ENCODE measurements at regions of chr4 and their contacts with region 1.

Region 1: GRCh38 chr4:48578132-48578968 is 88.3 kb downstream of the ZAR1 start:
- DNase-seq: peak in 1 of 2 donors; percentile 66
- ATAC-seq: peak; percentile 74 to 94 (median 89)
- H3K4me3 ChIP-seq: no peak overlapping the region
- H3K27ac ChIP-seq: peak overlapping the region in 2 of 10 donors; percentile 8 to 11
- H3K4me1 ChIP-seq: peaks cover 0 to 4% (median 0%) of the 10 kb centered on the region in 9 donors
- H3K27me3 ChIP-seq: no peaks in the 10 kb centered on the region
- CTCF ChIP-seq: peak; percentile 59 to 96 (median 89)

Region 2: DNA sequence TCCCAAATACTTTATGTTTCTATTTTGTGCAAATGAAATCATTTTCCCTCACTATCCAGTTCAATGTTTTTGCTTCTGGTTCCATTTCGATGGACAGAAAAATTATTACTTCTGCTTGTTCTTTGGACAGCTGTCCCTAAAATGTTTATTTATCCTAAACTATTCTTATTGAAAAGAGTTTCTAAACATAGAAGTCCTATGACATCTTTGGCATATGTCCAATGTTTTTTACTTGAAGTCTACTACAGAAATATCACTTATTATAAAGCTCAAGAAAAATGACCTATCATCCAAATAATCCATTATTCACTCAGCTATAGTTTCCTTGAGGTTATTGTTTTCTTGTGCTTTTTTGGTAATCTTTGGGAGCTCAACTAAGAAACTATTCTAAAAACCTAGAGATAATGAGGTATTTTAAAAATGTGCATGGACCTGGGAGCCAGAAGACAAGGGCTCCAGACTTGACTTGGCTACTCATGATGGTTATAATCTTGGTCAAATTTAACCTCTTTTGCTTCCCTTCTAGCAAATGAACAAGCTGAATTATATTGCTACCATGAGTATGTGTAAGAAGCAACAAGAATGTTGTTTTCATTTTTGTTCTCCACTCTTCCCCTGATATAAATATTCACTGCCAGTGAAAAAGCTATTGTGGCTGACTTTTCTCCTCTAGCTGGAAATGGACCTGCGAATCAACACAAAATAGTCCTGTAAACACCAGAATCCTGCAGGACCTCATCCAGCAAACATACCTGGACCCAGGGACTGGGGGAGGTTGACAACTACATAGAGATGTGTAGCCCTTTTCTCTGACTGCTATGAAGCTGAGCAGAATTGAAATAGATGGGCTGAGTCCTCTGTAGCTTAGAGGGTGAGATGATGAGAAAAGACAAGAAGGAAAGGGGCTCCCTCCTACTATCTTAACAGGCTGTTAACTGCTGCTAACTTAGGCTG is 64.3 kb after region 1 on chr4:
- intact Hi-C with region 1: no loop called
- DNase-seq: no peak
- ATAC-seq: peak in 1 of 8 donors; percentile 23
- H3K4me3 ChIP-seq: no peak overlapping the region
- H3K27ac ChIP-seq: peak overlapping the region in 7 of 10 donors; percentile 2 to 57 (median 31)
- H3K4me1 ChIP-seq: peaks cover 3 to 63% (median 39%) of the 10 kb centered on the region in 9 donors
- H3K27me3 ChIP-seq: no peaks in the 10 kb centered on the region
- CTCF ChIP-seq: no peak

Region 3: GRCh38 chr4:48681856-48682255 is 103.5 kb after region 1 on chr4:
- intact Hi-C with region 1: loop called in 8 of 10 experiments (anchors 1 to 10 kb)
- DNase-seq: no peak
- ATAC-seq: peak in 4 of 8 donors; percentile 44 to 70 (median 58)
- H3K4me3 ChIP-seq: no peak overlapping the region
- H3K27ac ChIP-seq: peak overlapping the region in 1 of 10 donors; percentile 19
- H3K4me1 ChIP-seq: peaks cover 0 to 45% (median 17%) of the 10 kb centered on the region in 9 donors
- H3K27me3 ChIP-seq: no peaks in the 10 kb centered on the region
- CTCF ChIP-seq: peak; percentile 25 to 74 (median 47)

Region 4: DNA sequence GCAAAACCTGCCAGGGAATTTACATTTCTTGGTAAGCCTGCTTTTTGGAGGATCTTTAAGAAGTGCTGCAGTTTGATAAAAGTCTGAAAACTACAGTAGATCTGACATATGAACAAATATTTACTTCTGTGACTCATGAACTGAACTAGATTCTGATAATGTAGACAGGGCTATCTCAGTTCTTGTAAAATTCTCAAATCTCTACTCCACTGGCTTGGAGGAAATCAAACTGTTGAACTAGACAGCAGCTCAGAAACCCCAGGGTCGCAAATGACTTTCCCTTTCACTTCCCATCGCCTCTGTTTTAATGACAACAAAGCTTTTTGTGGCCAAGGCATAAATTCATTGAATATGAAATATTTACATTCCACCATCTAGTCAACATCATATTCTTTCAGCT is 237.1 kb after region 1 on chr4:
- intact Hi-C with region 1: no loop called
- DNase-seq: no peak
- ATAC-seq: no peak
- H3K4me3 ChIP-seq: no peak overlapping the region
- H3K27ac ChIP-seq: no peak overlapping the region
- H3K4me1 ChIP-seq: no peaks in the 10 kb centered on the region
- H3K27me3 ChIP-seq: peaks cover 0 to 4% (median 0%) of the 10 kb centered on the region in 7 donors
- CTCF ChIP-seq: no peak

Region 5: GRCh38 chr4:48830706-48831531 is 252.6 kb after region 1 on chr4 and contains the start of gene OCIAD1:
- intact Hi-C with region 1: loop called in 4 of 10 experiments (anchors 5 to 10 kb)
- DNase-seq: peak; percentile 92 to 98
- ATAC-seq: peak; percentile 100
- H3K4me3 ChIP-seq: peak within 1 kb of the TSS; percentile 66 to 95 (median 80)
- H3K27ac ChIP-seq: peak within 1 kb of the TSS; percentile 85 to 98 (median 94)
- H3K4me1 ChIP-seq: peaks cover 4 to 24% (median 19%) of the 10 kb centered on the region in 9 donors
- H3K27me3 ChIP-seq: peaks cover 0 to 4% (median 0%) of the 10 kb centered on the region in 7 donors
- CTCF ChIP-seq: no peak
- total RNA-seq, gene OCIAD1: 131 to 183 (median 161) TPM

Region 6: GRCh38 chr4:48858130-48858529 is 279.8 kb after region 1 on chr4:
- intact Hi-C with region 1: loop called in 1 of 10 experiments (anchors 10 kb)
- DNase-seq: no peak
- ATAC-seq: no peak
- H3K4me3 ChIP-seq: no peak overlapping the region
- H3K27ac ChIP-seq: no peak overlapping the region
- H3K4me1 ChIP-seq: no peaks in the 10 kb centered on the region
- H3K27me3 ChIP-seq: no peaks in the 10 kb centered on the region
- CTCF ChIP-seq: no peak

Region 7: GRCh38 chr4:48906206-48907173 is 328.1 kb after region 1 on chr4 and contains the start of gene OCIAD2:
- intact Hi-C with region 1: loop called in 1 of 10 experiments (anchors 5 kb)
- DNase-seq: peak; percentile 50 to 63
- ATAC-seq: peak; percentile 81 to 92 (median 88)
- H3K4me3 ChIP-seq: peak within 1 kb of the TSS; percentile 40 to 84 (median 70)
- H3K27ac ChIP-seq: peak within 1 kb of the TSS in 9 of 10 donors; percentile 46 to 80 (median 71)
- H3K4me1 ChIP-seq: peaks cover 0 to 19% (median 12%) of the 10 kb centered on the region in 9 donors
- H3K27me3 ChIP-seq: no peaks in the 10 kb centered on the region
- CTCF ChIP-seq: peak in 4 of 9 donors; percentile 25 to 46 (median 36)
- total RNA-seq, gene OCIAD2: 11.4 to 30.2 (median 14.8) TPM

Region 8: GRCh38 chr4:48963042-48963679 is 384.8 kb after region 1 on chr4:
- intact Hi-C with region 1: loop called (anchors 2 to 10 kb)
- DNase-seq: peak; percentile 22 to 80
- ATAC-seq: peak; percentile 62 to 88 (median 80)
- H3K4me3 ChIP-seq: no peak overlapping the region
- H3K27ac ChIP-seq: no peak overlapping the region
- H3K4me1 ChIP-seq: no peaks in the 10 kb centered on the region
- H3K27me3 ChIP-seq: no peaks in the 10 kb centered on the region
- CTCF ChIP-seq: peak; percentile 88 to 99 (median 96)